ENCODE measurements at regions of chr4 and their contacts with region 1.

Region 1: DNA sequence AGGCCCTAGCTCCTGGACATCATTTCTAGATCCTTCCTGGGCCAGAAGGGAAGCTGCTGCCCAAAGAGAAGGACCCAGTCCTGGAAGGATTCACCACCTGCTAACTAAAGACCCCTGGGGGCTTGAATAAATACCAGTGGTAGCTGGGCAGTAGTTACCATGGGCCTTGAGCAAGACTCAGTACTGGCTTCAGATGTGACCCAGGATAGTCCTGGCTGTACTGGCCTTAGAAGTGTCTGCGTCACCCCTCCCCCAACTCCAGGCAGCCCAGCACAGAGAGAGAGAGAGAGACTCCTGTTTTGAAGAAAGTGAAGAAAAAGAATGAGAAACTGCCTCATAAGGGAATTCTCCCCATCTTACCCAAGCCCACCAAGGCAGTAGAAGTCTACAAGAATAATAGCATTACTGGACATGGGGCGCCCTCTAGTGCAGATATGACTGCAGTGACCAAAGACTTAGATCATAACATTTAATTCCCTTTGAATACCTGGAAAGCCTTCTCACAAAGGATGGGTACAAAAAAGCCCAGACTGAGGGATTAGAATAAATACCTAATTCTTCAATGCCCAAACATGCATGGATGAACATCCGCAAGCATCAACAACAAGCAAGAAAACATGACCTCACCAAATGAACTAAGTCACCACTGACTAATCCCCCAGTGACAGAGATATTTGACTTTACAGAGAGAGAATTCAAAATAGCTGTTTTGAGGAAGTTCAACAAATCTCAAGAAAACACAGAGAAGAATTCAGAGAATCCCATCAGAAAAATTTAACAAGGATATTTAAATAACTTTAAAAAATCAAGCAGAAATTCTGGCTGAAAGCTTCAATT is 171.8 kb downstream of the HNRNPD start:
- DNase-seq: no peak
- ATAC-seq: peak; percentile 50
- H3K4me3 Mint-ChIP-seq: no peak overlapping the region
- H3K27ac Mint-ChIP-seq: no peak overlapping the region
- H3K4me1 Mint-ChIP-seq: no peaks in the 10 kb centered on the region
- H3K27me3 Mint-ChIP-seq: peaks cover 16% of the 10 kb centered on the region
- CTCF ChIP-seq: no peak

Region 2: GRCh38 chr4:81913427-81913879 is 288.6 kb before region 1 on chr4:
- CTCF ChIA-PET with region 1: no interaction called
- POLR2A ChIA-PET with region 1: no interaction called
- intact Hi-C with region 1: loop called (anchors 10 kb)
- DNase-seq: peak; percentile 20
- ATAC-seq: peak; percentile 62
- H3K4me3 Mint-ChIP-seq: no peak overlapping the region
- H3K27ac Mint-ChIP-seq: no peak overlapping the region
- H3K4me1 Mint-ChIP-seq: peaks cover 3% of the 10 kb centered on the region
- H3K27me3 Mint-ChIP-seq: peaks cover 11% of the 10 kb centered on the region
- CTCF ChIP-seq: peak; percentile 17

Region 3: GRCh38 chr4:82149750-82150149 is 52.3 kb before region 1 on chr4:
- CTCF ChIA-PET with region 1: no interaction called
- POLR2A ChIA-PET with region 1: no interaction called
- intact Hi-C with region 1: no loop called
- DNase-seq: no peak
- ATAC-seq: no peak
- H3K4me3 Mint-ChIP-seq: no peak overlapping the region
- H3K27ac Mint-ChIP-seq: no peak overlapping the region
- H3K4me1 Mint-ChIP-seq: no peaks in the 10 kb centered on the region
- H3K27me3 Mint-ChIP-seq: peaks cover 16% of the 10 kb centered on the region
- CTCF ChIP-seq: no peak